ENCODE measurements at regions of chr12 and their contacts with region 1.

Region 1: GRCh38 chr12:56117778-56118687 is at the start of gene ZC3H10:
- DNase-seq: peak; percentile 99
- ATAC-seq: peak; percentile 86
- H3K4me3 ChIP-seq: peak within 1 kb of the TSS; percentile 90
- H3K27ac ChIP-seq: peak within 1 kb of the TSS; percentile 79
- H3K4me1 ChIP-seq: peaks cover 15% of the 10 kb centered on the region
- H3K27me3 ChIP-seq: no peaks in the 10 kb centered on the region
- CTCF ChIP-seq: peak; percentile 40 to 69 (median 48)
- EP300 ChIP-seq: no peak
- POLR2A ChIP-seq: peak; percentile 99
- RAD21 ChIP-seq: no peak
- polyA plus RNA-seq, gene ZC3H10: 0.56 to 0.75 TPM

Region 2: DNA sequence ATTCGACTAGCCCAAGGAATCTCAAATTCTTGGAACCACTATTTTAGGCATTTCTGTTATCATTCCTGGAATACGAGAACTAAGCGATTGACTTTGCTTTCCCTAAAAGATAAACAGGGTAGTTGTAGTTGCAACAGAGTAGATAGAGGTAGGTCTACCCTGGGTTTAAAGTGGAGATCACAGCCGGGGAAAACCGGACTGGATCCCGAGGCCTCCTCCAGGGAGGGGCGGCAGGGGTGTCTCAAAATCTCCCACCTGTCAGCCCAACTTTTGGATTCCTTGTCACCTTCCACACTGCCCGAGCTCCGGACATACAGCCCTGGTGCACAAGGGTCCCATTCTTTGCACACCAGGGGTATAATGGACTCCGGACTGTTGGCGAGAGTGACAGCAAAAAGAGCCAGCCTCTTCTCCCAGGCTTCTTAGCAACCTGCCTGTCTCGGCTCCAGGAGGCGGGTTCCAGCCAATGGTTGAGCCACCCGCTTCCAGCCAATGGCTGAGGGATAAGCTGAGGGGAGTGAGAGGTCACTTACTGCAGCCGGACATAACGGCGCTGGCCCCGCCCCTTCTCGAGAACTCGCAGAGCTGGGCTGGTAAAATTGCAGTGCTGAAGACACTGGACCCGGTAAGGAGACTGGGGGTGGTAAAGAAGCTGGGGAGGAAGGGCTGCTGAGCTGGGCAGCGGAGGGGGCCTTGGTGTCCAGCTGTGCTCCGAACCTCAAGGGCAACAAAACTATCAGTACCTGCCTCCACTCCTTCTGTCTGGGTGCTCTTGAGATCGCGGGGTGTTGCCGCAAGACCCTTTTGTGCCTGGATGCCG is 121.1 kb before region 1 on chr12 and contains the start of gene SUOX:
- CTCF ChIA-PET with region 1: interaction called, 5 read pairs
- POLR2A ChIA-PET with region 1: interaction called, 7 read pairs
- RAD21 ChIA-PET with region 1: interaction called, 3 read pairs
- SMC1A ChIA-PET with region 1: interaction called, 3 read pairs
- in situ Hi-C with region 1: no loop called
- intact Hi-C with region 1: loop called (anchors 5 kb)
- DNase-seq: peak; percentile 83
- ATAC-seq: peak; percentile 100
- H3K4me3 ChIP-seq: peak within 1 kb of the TSS; percentile 74
- H3K27ac ChIP-seq: peak within 1 kb of the TSS; percentile 33; the same call in 1 of the 2 replicates
- H3K4me1 ChIP-seq: peaks cover 3% of the 10 kb centered on the region; the same call in 1 of the 2 replicates
- H3K27me3 ChIP-seq: no peaks in the 10 kb centered on the region
- CTCF ChIP-seq: no peak
- EP300 ChIP-seq: no peak
- POLR2A ChIP-seq: peak; percentile 72
- RAD21 ChIP-seq: no peak
- polyA plus RNA-seq, gene SUOX: 5.1 to 5.2 TPM

Region 3: GRCh38 chr12:56104109-56104814 is 13.8 kb before region 1 on chr12 and contains the start of gene PA2G4:
- CTCF ChIA-PET with region 1: interaction called, 25 read pairs
- POLR2A ChIA-PET with region 1: interaction called, 95 read pairs
- RAD21 ChIA-PET with region 1: interaction called, 30 read pairs
- SMC1A ChIA-PET with region 1: interaction called, 26 read pairs
- in situ Hi-C with region 1: no loop called
- intact Hi-C with region 1: loop called (anchors 1 kb)
- DNase-seq: peak; percentile 97
- ATAC-seq: peak; percentile 97
- H3K4me3 ChIP-seq: peak within 1 kb of the TSS; percentile 97
- H3K27ac ChIP-seq: peak within 1 kb of the TSS; percentile 86
- H3K4me1 ChIP-seq: peaks cover 3% of the 10 kb centered on the region; the same call in 1 of the 2 replicates
- H3K27me3 ChIP-seq: no peaks in the 10 kb centered on the region; a peak in 1 of 4 replicates
- CTCF ChIP-seq: no peak
- EP300 ChIP-seq: peak in 1 of 2 experiments; percentile 47; a peak in 2 of 4 replicates
- POLR2A ChIP-seq: peak; percentile 93
- RAD21 ChIP-seq: no peak
- polyA plus RNA-seq, gene PA2G4: 148 to 215 TPM

Region 4: DNA sequence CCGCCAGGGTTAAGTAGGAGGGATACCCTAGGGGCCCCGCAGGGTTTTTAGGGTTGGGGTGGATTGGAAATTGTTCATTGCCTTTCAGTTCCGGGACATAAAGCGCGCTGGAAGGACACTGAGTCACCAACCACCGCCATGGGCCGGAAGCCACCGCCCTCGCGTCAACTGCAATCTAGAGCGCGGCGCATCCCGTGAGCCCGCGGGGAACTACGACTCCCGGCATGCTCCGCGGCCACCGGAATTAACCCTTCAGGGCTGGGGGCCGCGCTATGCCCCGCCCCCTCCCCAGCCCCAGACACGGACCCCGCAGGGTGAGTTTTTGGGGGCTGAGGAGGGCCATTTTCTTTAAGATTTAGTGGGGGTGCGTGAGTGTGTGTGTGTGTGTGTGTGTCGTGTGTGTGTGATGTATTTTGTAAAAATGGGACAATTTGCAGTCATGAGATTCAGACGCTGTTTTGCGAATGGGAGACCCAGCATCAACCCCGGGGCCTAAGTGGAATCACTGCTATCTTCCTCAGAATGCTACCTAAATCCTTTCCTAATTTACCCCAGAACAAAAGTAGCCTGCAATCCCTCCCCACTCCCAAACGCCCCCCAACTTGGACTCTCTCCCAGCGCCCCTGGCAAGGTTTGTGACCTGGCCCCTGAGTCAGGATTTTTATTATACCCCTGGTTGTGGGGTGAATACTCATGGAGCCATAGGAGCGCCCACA is 34.4 kb after region 1 on chr12 and contains the start of gene MYL6B:
- CTCF ChIA-PET with region 1: interaction called, 8 read pairs
- POLR2A ChIA-PET with region 1: interaction called, 4 read pairs
- RAD21 ChIA-PET with region 1: interaction called, 10 read pairs
- SMC1A ChIA-PET with region 1: interaction called, 5 read pairs
- in situ Hi-C with region 1: no loop called
- intact Hi-C with region 1: loop called (anchors 5 kb)
- DNase-seq: peak; percentile 66
- ATAC-seq: peak; percentile 94
- H3K4me3 ChIP-seq: peak within 1 kb of the TSS; percentile 84
- H3K27ac ChIP-seq: peak within 1 kb of the TSS; percentile 95
- H3K4me1 ChIP-seq: peaks cover 17% of the 10 kb centered on the region
- H3K27me3 ChIP-seq: no peaks in the 10 kb centered on the region
- CTCF ChIP-seq: no peak
- EP300 ChIP-seq: no peak
- POLR2A ChIP-seq: peak; percentile 93
- RAD21 ChIP-seq: no peak
- polyA plus RNA-seq, gene MYL6B: 117 to 153 TPM

Region 5: GRCh38 chr12:56224102-56224701 is 106.2 kb after region 1 on chr12 and contains the start of gene NABP2:
- CTCF ChIA-PET with region 1: interaction called, 48 read pairs
- POLR2A ChIA-PET with region 1: interaction called, 41 read pairs
- RAD21 ChIA-PET with region 1: interaction called, 14 read pairs
- SMC1A ChIA-PET with region 1: interaction called, 33 read pairs
- in situ Hi-C with region 1: no loop called
- intact Hi-C with region 1: loop called (anchors 1 kb)
- DNase-seq: peak; percentile 89
- ATAC-seq: peak; percentile 90
- H3K4me3 ChIP-seq: peak within 1 kb of the TSS; percentile 97
- H3K27ac ChIP-seq: peak within 1 kb of the TSS; percentile 65
- H3K4me1 ChIP-seq: 0 out of 2 replicates have a peak, but pooled peaks cover 3% of the 10 kb centered on the region
- H3K27me3 ChIP-seq: no peaks in the 10 kb centered on the region
- CTCF ChIP-seq: peak; percentile 65 to 86 (median 85)
- EP300 ChIP-seq: 0 out of 4 replicates have a peak, but pooled peaks of 1 of the 2 experiments have one; percentile 7
- POLR2A ChIP-seq: peak; percentile 78
- RAD21 ChIP-seq: peak; percentile 49; the same call in 1 of the 2 replicates
- polyA plus RNA-seq, gene NABP2: 20.7 to 29.5 TPM

Region 6: DNA sequence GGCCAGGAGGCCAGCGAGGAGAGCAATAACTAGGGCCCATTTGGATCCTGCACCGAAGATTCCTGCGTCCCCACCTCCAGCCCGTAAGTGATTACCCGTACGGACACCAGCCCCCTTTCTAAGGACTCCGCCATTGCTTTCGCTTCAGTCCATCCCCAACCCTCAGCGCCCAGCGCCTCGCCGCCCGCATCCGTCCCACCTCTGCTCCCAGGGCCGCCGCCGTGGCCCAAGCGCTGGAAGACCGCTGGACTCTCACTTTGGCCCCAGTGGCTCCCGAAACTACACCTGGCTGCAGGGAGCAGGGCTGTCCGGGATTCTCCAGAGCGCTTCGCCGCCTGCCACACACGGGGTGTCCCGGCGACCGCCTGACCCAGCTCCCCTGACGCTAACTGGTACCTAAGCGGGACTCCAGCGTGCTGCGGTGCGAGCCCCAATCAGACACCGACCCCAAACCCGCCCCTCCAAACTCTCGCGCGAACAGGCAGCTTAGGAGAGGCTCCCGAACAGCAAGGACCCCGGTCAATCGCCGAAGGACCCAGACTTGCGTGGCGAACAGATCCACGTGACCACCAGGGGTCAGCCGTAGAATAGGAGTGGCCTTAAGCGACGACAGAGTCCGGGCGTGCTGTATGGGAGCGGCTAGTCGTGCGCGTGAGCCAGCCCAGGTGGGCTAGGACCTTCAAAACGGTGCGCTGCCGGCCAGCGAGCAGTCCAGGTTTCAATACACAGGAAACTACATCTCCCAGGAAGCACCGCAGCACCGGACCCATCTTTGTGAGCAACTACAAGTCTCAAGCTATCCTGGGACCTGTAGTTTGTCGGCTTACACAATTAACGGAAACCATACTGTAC is 197.8 kb after region 1 on chr12 and contains the start of gene CNPY2:
- CTCF ChIA-PET with region 1: interaction called, 3 read pairs
- POLR2A ChIA-PET with region 1: interaction called, 3 read pairs
- RAD21 ChIA-PET with region 1: no interaction called
- SMC1A ChIA-PET with region 1: no interaction called
- in situ Hi-C with region 1: no loop called
- intact Hi-C with region 1: loop called (anchors 5 kb)
- DNase-seq: peak; percentile 97
- ATAC-seq: peak; percentile 95
- H3K4me3 ChIP-seq: peak within 1 kb of the TSS; percentile 97
- H3K27ac ChIP-seq: peak within 1 kb of the TSS; percentile 92
- H3K4me1 ChIP-seq: peaks cover 3% of the 10 kb centered on the region
- H3K27me3 ChIP-seq: no peaks in the 10 kb centered on the region
- CTCF ChIP-seq: peak in 1 of 3 experiments; percentile 50; a peak in 2 of 6 replicates
- EP300 ChIP-seq: no peak
- POLR2A ChIP-seq: peak; percentile 97
- RAD21 ChIP-seq: peak; percentile 55
- polyA plus RNA-seq, gene CNPY2: 25.0 to 50.3 TPM

Region 7: DNA sequence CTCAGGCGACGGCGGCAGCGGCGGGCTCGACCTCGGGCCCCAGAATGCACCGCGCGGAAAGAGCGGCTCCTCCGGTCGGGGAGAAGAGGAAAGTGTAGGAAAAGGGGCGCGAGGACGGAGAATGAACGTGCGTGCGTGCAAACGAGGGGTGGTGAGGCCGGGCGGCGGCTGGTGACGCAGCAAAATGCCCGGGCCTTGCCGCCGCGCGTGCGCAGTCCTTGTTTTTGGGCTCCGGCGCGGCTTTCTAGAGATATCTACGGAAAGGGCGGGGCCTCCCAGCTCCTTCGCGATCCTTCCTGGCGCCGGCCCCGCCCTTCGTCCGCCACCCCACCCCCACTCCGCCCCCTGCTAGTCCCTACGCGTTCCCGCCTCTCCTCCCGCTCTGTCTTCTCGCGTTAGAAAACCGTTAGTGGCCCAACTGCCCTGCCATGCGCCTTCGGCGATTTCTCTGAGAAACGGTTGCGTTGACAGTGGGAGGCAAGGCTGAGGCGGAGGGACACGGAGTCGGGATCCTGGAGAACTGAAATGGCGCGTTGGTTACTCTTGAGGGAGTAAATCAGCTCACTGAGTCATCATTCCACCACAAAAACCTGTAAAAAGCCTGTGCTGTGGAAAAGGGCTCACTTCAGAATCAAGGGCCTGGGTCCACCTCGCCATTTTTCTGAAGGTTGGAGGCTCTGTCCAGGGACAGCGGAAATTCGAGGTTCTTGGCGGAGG is 570.3 kb after region 1 on chr12 and contains the start of gene PTGES3:
- CTCF ChIA-PET with region 1: no interaction called
- POLR2A ChIA-PET with region 1: no interaction called
- RAD21 ChIA-PET with region 1: no interaction called
- SMC1A ChIA-PET with region 1: no interaction called
- in situ Hi-C with region 1: no loop called
- intact Hi-C with region 1: loop called (anchors 5 kb)
- DNase-seq: peak; percentile 92
- ATAC-seq: peak; percentile 75
- H3K4me3 ChIP-seq: peak within 1 kb of the TSS; percentile 90
- H3K27ac ChIP-seq: peak within 1 kb of the TSS; percentile 99
- H3K4me1 ChIP-seq: no peaks in the 10 kb centered on the region
- H3K27me3 ChIP-seq: no peaks in the 10 kb centered on the region
- CTCF ChIP-seq: no peak
- EP300 ChIP-seq: peak in 1 of 2 experiments; percentile 47; a peak in 2 of 4 replicates
- POLR2A ChIP-seq: peak; percentile 93
- RAD21 ChIP-seq: no peak
- polyA plus RNA-seq, gene PTGES3: 117 to 186 TPM

Measured in GM12878 (cell line).